ENCODE measurements at regions of chr3 and their contacts with region 1.

Region 1: DNA sequence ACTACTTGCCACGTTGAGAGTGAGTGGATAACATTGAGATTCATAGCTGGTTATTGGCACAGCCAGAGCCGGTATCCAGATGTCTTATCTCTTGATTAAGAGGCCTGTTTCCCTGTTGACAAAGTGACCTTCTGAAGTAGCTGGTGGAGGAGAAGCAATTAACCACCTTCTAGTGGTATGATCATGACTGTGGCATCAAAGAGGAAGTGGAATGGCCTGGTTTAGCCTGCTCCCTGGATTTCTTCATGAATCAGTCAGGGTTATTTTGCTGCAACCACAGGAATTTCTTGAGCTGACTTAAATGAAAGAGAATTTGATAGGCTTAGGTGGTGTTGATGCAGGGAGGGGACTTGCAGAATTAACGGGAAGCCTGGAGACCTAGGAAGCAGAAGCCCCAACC is 398.3 kb downstream of the MFSD1 start:
- DNase-seq: peak; percentile 63 to 86
- H3K4me3 ChIP-seq: no peak overlapping the region
- H3K27ac ChIP-seq: no peak overlapping the region
- H3K4me1 ChIP-seq: peaks cover 6% of the 10 kb centered on the region
- H3K27me3 ChIP-seq: no peaks in the 10 kb centered on the region
- CTCF ChIP-seq: no peak

Region 2: GRCh38 chr3:159163656-159164055 is 36.5 kb before region 1 on chr3:
- CTCF ChIA-PET with region 1: no interaction called
- POLR2A ChIA-PET with region 1: no interaction called
- intact Hi-C with region 1: loop called (anchors 1 kb)
- DNase-seq: no peak
- H3K4me3 ChIP-seq: no peak overlapping the region
- H3K27ac ChIP-seq: peak overlapping the region; percentile 70
- H3K4me1 ChIP-seq: peaks cover 15% of the 10 kb centered on the region
- H3K27me3 ChIP-seq: no peaks in the 10 kb centered on the region
- CTCF ChIP-seq: no peak

Region 3: DNA sequence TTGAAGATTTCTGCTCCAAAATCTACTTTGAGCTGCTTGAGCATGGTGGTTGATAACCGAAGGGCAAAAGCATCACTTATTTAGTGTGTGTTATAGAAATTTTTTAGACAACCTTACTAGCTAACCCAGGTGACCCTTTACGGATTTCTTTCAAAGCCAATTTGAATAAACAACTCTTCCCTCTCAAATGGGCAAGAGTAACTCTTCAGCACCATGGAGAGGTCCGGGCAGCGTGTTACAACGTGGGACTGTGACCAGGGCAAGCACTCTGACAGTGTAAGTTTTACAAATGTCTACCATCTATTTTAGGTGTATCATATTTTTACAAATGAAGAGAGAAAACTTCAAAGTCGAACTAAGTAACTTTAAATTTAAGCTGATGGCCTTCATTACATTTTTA is 73.4 kb after region 1 on chr3:
- CTCF ChIA-PET with region 1: no interaction called
- POLR2A ChIA-PET with region 1: no interaction called
- intact Hi-C with region 1: no loop called
- DNase-seq: peak in 1 of 2 experiments; percentile 60
- H3K4me3 ChIP-seq: no peak overlapping the region
- H3K27ac ChIP-seq: no peak overlapping the region
- H3K4me1 ChIP-seq: no peaks in the 10 kb centered on the region
- H3K27me3 ChIP-seq: no peaks in the 10 kb centered on the region
- CTCF ChIP-seq: no peak